Thyroid gland (tissue), 4 donors: ENCODE measurements at regions of chr2 and their contacts with region 1.

Region 1: DNA sequence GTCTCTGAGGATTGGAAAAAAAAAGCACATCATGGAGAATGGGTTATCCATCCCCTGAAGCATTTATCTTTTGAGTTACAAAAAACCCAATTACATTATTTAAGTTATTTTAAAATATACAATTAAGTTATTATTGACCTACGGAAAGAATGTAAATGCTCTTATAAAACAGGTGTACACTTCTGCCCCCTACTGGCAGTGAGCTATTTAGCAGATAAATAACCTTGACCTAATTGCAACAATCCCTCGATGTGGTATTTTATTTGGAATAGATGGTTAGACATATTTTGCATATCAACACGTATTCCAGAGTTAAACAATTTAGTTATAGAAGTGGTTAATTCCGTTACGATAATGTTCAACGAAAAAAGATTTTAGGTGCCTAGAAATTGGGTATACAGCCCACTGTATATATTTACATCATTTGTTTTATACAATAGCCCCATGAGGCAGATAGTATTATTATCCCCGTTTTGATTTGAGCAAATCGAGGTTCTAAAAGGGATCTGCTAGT is 9.1 kb upstream of the DAW1 start:
- DNase-seq: peak in 1 of 2 donors; percentile 31
- H3K4me3 ChIP-seq: no peak overlapping the region
- H3K27ac ChIP-seq: no peak overlapping the region
- H3K4me1 ChIP-seq: no peaks in the 10 kb centered on the region
- H3K27me3 ChIP-seq: no peaks in the 10 kb centered on the region
- CTCF ChIP-seq: peak; percentile 22 to 79 (median 64)
- POLR2A ChIP-seq: no peak

Region 2: GRCh38 chr2:227774011-227774624 is 88.2 kb before region 1 on chr2:
- intact Hi-C with region 1: loop called (anchors 10 kb)
- DNase-seq: no peak
- H3K4me3 ChIP-seq: no peak overlapping the region
- H3K27ac ChIP-seq: no peak overlapping the region
- H3K4me1 ChIP-seq: no peaks in the 10 kb centered on the region
- H3K27me3 ChIP-seq: no peaks in the 10 kb centered on the region
- CTCF ChIP-seq: peak in 2 of 6 experiments; percentile 18 to 22
- POLR2A ChIP-seq: no peak